Dorsolateral prefrontal cortex (tissue), 120 donors: ENCODE measurements at regions of chr6 and their contacts with region 1.

Region 1: GRCh38 chr6:135938576-135939207 is 87.2 kb downstream of the PDE7B start:
- DNase-seq: no peak
- H3K4me3 ChIP-seq: peak overlapping the region in 33 of 59 donors; percentile 2 to 48 (median 19)
- H3K27ac ChIP-seq: peak overlapping the region in 51 of 59 donors; percentile 12 to 85 (median 64)
- H3K27me3 ChIP-seq: no peaks in the 10 kb centered on the region
- CTCF ChIP-seq: peak in 53 of 56 donors; percentile 10 to 71 (median 46)

Region 2: DNA sequence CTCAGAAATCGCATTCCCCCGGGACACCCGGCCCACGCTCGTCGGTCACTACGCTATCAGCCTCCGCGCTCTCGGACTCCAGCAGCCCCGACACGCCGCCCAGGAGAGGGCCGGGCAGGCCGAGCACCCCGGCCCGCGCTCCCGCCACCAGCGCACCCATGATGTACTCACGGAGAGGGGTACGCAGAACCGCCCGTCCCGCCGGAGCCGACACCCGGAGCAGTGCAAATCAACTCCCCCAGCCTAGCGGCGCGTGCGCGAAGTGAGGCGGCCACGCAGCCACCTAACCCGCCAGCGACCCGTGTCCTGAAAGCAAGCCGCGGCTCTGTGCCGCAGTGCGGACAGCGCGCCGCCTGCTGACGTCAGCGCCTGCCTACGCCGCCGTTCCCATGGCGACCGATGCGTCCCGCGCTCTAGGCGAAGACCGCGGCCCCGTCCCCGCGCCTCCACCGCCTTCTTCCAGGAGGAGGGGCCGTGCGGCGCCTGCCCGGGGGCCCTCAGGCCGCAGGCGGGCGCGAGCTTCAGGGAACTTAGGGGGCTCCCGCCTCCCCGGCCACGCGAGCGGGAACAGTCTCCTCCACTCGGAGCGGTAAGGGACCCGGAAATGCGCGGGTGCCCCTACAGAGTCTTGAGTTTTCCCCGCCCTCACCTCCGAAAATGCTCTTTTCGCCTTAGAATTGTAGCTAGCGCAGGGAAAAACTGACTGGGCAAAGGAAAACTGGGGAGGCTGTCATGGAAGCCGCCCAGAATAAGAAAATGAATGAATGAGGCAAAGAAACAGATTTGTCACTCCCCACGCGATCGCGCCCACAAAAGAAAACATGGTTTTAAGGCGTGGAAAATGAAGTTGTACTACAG is 441.1 kb before region 1 on chr6 and contains the start of gene AHI1:
- intact Hi-C with region 1: loop called in 1 of 2 experiments (anchors 5 kb)
- DNase-seq: peak; percentile 87 to 98 (median 94)
- H3K4me3 ChIP-seq: peak within 1 kb of the TSS; percentile 69 to 97 (median 89)
- H3K27ac ChIP-seq: peak within 1 kb of the TSS; percentile 71 to 100 (median 96)
- H3K27me3 ChIP-seq: no peaks in the 10 kb centered on the region
- CTCF ChIP-seq: peak in 36 of 56 donors; percentile 2 to 64 (median 34)
- total RNA-seq, gene AHI1: 83.5 to 252 (median 142) TPM

Region 3: DNA sequence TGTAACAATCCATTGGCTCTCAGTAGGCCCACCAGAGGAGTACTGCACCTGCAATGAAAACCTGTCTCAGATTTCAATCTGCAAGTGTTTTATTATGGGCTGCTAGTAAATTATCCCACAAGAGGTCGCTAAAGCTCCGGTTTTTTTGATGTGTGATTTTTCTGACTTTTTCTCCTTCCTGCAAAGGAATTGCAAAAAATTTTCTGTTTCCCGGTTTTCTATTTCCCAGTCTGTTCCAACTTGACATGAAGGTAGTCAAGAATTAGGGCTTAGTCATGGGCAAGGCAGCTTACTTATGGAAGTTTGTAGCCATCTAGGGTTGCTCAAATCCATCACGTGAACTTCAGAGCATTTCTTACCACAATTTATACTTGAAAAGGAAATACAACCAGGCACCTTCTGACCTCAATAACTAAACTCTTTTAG is 402.7 kb before region 1 on chr6:
- intact Hi-C with region 1: loop called in 1 of 2 experiments (anchors 10 kb)
- DNase-seq: no peak
- H3K4me3 ChIP-seq: no peak overlapping the region
- H3K27ac ChIP-seq: no peak overlapping the region
- H3K27me3 ChIP-seq: no peaks in the 10 kb centered on the region
- CTCF ChIP-seq: peak; percentile 57 to 89 (median 75)

Region 4: DNA sequence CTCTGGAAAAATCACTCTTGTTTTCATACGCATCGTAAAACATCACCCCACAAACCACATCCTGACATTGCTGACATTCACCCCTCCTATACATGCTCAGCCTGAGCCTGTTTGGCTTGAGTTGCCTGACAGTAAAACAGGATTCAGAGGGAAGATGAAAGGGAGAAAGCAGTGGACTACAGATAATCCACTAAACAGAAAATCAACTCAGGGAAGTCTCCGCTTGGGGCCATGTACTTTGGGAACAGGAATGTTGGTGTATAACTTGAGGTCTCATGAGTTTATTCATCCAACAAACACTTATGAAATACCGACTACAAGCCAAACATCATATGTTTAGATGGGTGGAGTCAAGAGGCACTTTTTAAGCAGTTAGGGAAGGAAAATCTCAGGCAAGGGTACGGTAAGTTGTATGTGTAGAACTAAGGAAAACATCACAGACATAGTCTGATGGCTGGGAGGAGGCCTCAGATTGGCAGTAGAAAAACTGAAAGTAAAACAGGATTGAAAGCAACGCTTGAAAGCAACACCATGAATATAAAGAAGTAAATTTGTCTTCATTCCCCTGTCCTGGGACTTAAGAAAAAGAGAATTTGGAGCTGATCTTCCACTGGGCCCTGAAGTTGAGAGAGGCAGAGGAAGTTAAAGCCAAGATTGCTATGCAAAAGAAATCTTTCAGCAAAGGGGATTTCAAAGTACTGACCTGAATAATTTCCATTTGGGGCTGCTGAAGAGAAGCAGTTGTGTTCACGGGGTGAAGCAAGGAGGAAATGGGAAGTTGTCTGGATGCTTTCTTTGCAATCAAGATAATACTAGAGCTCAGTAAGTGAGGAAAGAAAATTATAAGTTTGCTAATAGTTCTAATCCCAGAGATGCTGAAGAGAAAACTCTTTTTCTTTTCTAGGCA is 58.4 kb before region 1 on chr6:
- intact Hi-C with region 1: no loop called
- DNase-seq: no peak
- H3K4me3 ChIP-seq: peak overlapping the region in 37 of 59 donors; percentile 0 to 51 (median 27)
- H3K27ac ChIP-seq: peak overlapping the region in 37 of 59 donors; percentile 1 to 75 (median 36)
- H3K27me3 ChIP-seq: no peaks in the 10 kb centered on the region
- CTCF ChIP-seq: no peak